Gastrocnemius medialis (tissue), 4 donors: ENCODE measurements at regions of chr18 and their contacts with region 1.

Region 1: GRCh38 chr18:9683407-9684396 is 24.4 kb upstream of the RAB31 start:
- DNase-seq: peak in 1 of 2 donors; percentile 23
- ATAC-seq: peak; percentile 54 to 58
- H3K4me3 ChIP-seq: no peak overlapping the region
- H3K27ac ChIP-seq: peak overlapping the region in 3 of 4 donors; percentile 24 to 54 (median 30)
- H3K4me1 ChIP-seq: peaks cover 6 to 9% of the 10 kb centered on the region in 2 donors
- H3K27me3 ChIP-seq: no peaks in the 10 kb centered on the region
- CTCF ChIP-seq: peak in 3 of 5 experiments; percentile 10 to 30 (median 11)
- POLR2A ChIP-seq: no peak

Region 2: GRCh38 chr18:9643549-9643948 is 40.2 kb before region 1 on chr18:
- in situ Hi-C with region 1: no loop called
- intact Hi-C with region 1: no loop called
- DNase-seq: no peak
- ATAC-seq: no peak
- H3K4me3 ChIP-seq: no peak overlapping the region
- H3K27ac ChIP-seq: no peak overlapping the region
- H3K4me1 ChIP-seq: no peaks in the 10 kb centered on the region
- H3K27me3 ChIP-seq: no peaks in the 10 kb centered on the region
- CTCF ChIP-seq: no peak
- POLR2A ChIP-seq: no peak

Region 3: GRCh38 chr18:9760641-9761040 is 76.9 kb after region 1 on chr18:
- in situ Hi-C with region 1: no loop called
- intact Hi-C with region 1: no loop called
- DNase-seq: no peak
- ATAC-seq: no peak
- H3K4me3 ChIP-seq: no peak overlapping the region
- H3K27ac ChIP-seq: no peak overlapping the region
- H3K4me1 ChIP-seq: no peaks in the 10 kb centered on the region
- H3K27me3 ChIP-seq: no peaks in the 10 kb centered on the region
- CTCF ChIP-seq: no peak
- POLR2A ChIP-seq: no peak

Region 4: DNA sequence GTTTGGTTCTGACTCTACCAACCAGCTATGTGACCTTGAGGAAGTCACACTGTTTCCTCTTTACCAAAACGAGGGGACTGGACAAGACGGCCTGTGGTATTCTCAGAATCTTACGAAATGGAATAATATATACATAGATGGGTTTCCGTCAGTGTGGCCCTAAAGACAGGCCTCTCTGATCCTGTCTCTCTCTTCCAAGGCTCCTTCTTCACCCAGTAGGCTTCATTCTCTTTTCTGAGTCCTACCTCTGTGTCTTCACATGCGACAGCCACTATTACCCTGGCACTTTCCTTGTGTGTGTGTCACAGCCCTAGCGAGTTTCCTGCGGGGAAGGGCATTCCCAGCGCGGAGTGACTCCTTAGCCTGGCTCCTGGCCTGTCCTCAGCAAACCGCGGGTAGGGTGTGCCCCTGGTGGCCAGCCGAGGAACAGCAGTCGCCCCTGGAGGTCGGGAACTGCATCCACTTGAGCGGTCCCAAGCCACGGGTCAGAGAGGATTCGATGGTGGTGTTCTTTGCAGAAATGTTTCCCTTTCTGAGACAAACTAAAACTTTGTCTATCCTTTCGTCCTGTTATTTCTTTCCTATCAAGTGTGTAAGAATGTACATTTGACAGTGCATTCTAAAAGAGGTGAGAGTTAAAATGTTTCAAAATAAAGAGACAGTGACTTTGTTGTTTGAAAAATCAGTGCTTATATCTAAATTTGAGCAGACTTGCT is 87.7 kb after region 1 on chr18:
- in situ Hi-C with region 1: no loop called
- intact Hi-C with region 1: loop called (anchors 1 kb)
- DNase-seq: peak; percentile 57 to 73
- ATAC-seq: peak; percentile 82 to 94
- H3K4me3 ChIP-seq: no peak overlapping the region
- H3K27ac ChIP-seq: peak overlapping the region in 1 of 4 donors; percentile 1
- H3K4me1 ChIP-seq: no peaks in the 10 kb centered on the region
- H3K27me3 ChIP-seq: no peaks in the 10 kb centered on the region
- CTCF ChIP-seq: peak; percentile 84 to 96 (median 89)
- POLR2A ChIP-seq: no peak